BJ (cell line): ENCODE measurements at regions of chr1 and their contacts with region 1.

Region 1: GRCh38 chr1:51897699-51898031 is 19.1 kb upstream of the NRDC start:
- DNase-seq: peak; percentile 83
- H3K4me3 ChIP-seq: no peak overlapping the region
- H3K27me3 ChIP-seq: no peaks in the 10 kb centered on the region
- CTCF ChIP-seq: no peak

Region 2: DNA sequence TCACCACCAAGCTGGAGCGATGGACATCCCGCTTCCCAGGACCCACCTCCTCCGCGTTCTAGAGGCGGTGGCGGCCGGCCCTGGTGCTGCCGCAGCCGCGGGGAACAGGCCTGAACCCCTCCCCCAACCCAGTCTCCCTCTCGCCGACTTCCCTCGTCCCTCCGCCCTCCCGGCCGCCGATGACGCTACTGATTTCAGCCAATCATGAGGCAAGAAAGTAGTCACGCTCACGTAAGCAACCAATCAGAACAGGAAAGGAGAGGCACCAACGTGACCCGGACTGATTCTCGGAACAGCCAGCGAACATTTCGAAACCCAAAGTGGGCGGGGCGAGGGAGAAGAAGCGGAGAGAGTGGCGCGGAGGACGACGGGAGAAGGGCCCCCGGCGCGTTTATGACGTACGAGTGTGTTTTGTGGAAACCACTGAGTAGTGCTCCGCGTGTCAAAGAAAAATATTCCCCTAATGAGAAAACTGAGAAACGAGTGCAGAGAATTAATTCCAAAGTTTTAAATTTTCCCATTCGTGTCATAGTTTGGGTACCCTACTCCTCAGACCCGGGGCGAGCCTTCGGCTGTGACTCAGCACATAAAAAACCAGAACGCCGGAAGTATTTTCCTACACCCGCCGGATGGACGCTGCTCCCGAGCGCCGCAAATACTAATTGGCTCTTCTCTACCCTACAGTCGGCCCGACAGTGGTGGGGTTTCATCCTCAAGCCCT is 18.9 kb before region 1 on chr1 and contains the start of gene NRDC:
- CTCF ChIA-PET with region 1: interaction called, 10 read pairs
- POLR2A ChIA-PET with region 1: no interaction called
- DNase-seq: peak; percentile 99
- H3K4me3 ChIP-seq: peak within 1 kb of the TSS; percentile 99
- H3K27me3 ChIP-seq: no peaks in the 10 kb centered on the region
- CTCF ChIP-seq: no peak
- polyA plus RNA-seq, gene NRDC: 69.2 and 129 TPM in 2 replicates

Region 3: GRCh38 chr1:51936531-51936930 is 38.9 kb after region 1 on chr1:
- CTCF ChIA-PET with region 1: interaction called, 11 read pairs
- POLR2A ChIA-PET with region 1: no interaction called
- DNase-seq: no peak
- H3K4me3 ChIP-seq: no peak overlapping the region
- H3K27me3 ChIP-seq: no peaks in the 10 kb centered on the region
- CTCF ChIP-seq: peak; percentile 46

Region 4: DNA sequence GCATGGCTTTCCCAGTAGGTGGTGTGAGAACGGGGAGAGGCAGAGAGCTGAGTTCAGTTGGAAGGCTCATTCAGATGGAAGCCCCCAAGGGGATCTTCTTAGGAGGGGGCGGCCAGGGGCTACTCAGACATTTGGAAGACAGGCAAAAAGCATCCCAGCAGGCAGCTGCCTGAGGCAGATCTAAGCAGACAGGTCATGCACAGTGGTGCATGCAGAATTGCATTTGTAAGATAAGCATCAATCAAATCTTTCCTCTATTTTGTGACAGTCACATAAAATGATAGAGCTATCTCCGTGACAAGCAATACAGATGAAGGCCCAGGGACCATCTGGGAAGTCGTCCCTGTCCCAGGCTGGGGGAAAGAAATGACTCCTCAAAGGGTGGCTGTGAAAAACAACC is 89.1 kb after region 1 on chr1:
- CTCF ChIA-PET with region 1: interaction called, 12 read pairs
- POLR2A ChIA-PET with region 1: no interaction called
- DNase-seq: no peak
- H3K4me3 ChIP-seq: no peak overlapping the region
- H3K27me3 ChIP-seq: no peaks in the 10 kb centered on the region
- CTCF ChIP-seq: no peak

Region 5: DNA sequence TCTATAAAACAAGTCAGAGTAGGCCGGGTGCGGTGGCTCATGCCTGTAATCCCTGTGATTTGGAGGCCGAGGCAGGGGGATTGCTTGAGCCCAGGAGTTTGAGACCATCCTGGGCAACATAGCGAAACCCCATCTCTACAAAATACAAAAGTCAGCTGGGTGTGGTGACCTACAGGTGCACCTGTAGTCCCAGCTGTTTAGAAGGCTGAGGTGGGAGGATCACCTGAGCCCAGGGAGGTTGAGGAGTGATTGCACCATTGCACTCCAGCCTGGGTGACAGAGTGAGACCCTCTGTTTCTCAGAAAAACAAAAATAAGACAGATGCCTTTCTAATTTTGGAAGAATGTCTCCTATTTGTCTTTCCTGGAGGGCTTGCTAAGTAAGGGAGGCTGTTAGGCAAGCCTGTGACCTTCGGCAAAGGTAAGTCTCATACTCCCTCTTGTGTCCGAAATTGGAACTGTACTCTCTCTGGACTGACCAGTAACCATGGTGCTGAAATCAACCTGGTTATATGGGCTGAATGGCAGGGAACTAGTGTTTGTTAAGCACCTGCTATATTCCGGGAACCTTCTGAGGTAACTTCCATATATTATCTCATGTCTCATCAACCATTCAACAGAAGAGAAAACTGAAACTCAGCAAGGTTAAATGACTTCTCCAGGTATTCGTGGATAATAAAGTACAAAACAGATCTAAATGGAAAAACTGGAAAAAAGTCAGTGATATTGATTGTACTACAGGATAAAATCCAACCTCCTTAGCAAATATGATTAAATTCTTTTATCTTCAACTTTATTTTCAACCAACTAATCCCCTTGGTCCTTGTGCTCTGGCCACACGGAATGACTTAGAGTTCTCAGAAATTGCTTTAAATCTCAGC is 104.6 kb after region 1 on chr1:
- CTCF ChIA-PET with region 1: interaction called, 47 read pairs
- POLR2A ChIA-PET with region 1: no interaction called
- DNase-seq: peak; percentile 63
- H3K4me3 ChIP-seq: no peak overlapping the region
- H3K27me3 ChIP-seq: no peaks in the 10 kb centered on the region
- CTCF ChIP-seq: peak; percentile 87

Region 6: GRCh38 chr1:52033190-52034049 is 135.8 kb after region 1 on chr1 and contains the start of gene KTI12:
- CTCF ChIA-PET with region 1: no interaction called
- POLR2A ChIA-PET with region 1: no interaction called
- DNase-seq: peak; percentile 44
- H3K4me3 ChIP-seq: peak within 1 kb of the TSS; percentile 96
- H3K27me3 ChIP-seq: no peaks in the 10 kb centered on the region
- CTCF ChIP-seq: no peak
- polyA plus RNA-seq, gene KTI12: 7.8 and 9.6 TPM in 2 replicates